ENCODE measurements at regions of chr6 and their contacts with region 1.

Region 1: GRCh38 chr6:25992413-25993037 is 29.9 kb downstream of the TRIM38 start:
- DNase-seq: peak; percentile 93
- CTCF ChIP-seq: peak; percentile 100

Region 2: DNA sequence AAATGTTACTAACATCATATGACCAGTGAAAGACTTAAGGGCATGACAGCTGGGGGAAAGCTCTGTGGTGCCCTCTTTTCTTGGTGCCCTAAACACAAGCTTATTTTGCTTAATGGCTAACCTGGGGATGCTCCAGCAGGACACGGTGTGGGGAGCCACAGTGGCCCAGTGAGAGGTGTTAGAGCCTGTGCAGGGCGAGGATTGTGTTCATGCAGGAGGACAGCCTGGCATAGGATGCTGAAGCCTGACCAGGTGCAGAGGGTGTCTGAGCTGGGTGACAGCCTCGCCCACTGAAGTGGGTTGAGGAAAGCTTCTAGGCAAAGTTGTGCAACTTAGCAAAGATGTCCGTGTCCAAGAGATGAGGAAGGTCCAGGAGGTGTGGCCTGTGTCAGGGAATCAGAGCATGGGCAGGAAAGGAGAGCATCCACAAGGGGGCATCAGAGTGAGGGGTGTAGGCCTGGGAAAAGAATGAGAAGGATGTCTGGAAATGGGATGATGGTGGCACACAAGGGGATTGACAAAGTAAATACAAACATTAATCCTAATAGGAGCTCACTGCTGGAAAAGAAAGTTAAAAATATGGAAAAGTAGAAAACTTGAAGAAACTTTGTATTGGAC is 204.1 kb before region 1 on chr6:
- CTCF ChIA-PET with region 1: interaction called, 16 read pairs
- POLR2A ChIA-PET with region 1: no interaction called
- DNase-seq: peak; percentile 22
- CTCF ChIP-seq: peak; percentile 46

Region 3: DNA sequence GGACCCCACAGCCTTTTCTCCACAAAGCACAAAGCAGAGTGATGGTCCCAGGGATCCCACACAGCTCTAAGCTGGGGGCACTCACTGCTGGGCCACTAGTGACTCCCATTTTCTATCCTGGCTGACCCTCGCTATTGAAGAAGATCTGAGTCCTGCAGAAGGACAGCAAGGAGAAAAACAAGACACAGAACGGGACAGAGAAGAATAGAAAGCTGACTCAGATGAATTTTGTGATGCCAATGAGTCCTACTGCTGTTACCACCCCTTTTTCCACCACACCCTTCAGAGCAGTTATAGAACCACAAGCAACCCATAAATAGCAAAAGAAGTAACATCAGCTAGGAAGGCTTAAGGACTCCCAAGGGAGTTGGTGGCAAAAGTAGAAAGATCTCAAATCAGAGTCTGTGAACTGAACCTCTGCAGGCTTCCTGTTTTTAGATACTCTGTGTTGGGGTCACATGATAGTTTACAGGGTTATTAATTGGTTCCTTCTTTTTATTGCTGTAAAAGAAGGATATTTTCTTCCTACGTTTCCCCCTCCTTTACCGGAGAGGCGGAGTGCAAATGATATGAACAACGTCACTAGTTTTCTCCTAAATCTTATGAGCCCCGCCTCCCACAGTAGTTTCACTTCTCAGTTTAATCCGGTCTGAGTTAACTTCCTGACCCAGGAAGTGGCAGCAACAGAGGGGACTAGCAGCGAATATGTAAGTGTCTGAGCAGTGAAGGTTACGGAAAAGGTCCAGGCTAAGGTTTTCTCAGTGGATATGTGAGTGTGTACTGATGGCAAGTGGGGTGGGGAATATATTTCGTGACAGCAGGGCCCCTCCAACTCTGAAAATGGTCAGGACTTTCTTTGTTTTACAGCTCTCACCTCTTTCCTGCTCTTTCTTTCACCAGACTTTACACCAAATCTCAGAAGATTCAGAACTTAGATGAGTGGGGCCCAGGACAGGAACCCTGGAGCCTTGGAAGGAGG is 30.1 kb before region 1 on chr6 and contains the start of gene TRIM38:
- CTCF ChIA-PET with region 1: interaction called, 48 read pairs
- POLR2A ChIA-PET with region 1: interaction called, 7 read pairs
- DNase-seq: peak; percentile 77
- CTCF ChIP-seq: no peak

Region 4: GRCh38 chr6:25971187-25971811 is 21.2 kb before region 1 on chr6:
- CTCF ChIA-PET with region 1: interaction called, 48 read pairs
- POLR2A ChIA-PET with region 1: interaction called, 7 read pairs
- DNase-seq: no peak
- CTCF ChIP-seq: no peak

Region 5: DNA sequence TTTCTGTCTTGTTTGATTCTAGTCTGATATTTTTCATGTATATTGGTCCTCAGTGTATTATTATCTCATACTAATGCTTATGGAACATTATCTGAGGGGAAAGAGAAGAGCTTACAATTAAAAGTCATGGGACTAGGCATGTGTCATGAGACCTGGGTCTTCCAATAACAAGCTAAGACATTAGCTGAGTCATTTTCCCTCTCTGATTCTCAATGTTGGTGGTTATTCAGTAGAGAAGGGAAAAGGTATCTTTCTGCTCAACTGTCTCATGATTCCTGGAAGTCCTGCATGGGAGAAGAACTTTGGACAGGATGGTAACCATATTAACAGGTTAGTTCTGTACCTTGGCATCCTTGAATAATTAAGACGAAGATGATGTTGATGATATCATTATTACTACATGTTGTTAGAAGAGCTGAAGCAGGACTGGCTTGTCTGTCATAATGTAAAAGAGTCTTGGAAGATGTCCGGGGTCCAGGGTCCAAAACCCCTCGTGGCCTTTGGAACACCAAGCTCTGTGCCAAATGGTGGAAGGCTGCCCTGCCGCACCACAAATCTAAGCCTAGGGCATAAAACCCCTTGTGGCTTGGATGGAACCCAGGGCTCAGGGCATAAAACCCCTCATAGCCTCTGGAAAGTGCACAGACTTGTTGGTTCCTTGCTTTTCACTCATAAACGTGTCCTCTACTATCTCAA is 10.8 kb before region 1 on chr6:
- CTCF ChIA-PET with region 1: interaction called, 50 read pairs
- POLR2A ChIA-PET with region 1: no interaction called
- DNase-seq: no peak
- CTCF ChIP-seq: no peak

Region 6: DNA sequence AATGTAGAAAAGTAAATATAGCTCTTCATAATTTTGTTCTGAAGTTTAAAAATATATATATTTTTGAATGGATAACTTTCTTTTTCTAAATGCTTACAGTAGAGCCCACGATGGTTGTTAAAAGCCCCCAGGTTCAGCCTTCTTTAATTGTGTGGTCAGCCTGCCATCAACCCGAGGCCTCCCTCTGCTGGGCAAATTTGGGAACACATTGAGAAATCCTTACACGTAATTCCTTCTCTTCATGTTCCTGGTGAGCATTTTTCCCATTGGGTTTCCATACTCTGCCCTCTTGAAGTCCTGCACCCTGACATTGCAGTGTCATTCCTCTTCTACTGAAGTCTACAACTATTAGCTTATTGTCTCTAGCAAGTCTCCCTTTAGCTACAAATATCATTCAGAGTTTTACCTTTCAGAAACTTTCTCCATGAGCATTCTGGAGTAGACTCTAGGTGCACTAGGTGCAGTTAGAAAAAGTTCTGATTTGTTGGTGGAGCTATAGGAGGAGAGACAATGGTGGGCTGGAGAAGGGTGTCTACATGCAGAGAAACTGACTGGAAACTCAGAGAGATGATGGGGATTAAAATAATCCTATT is 10.7 kb after region 1 on chr6:
- CTCF ChIA-PET with region 1: interaction called, 125 read pairs
- POLR2A ChIA-PET with region 1: interaction called, 7 read pairs
- DNase-seq: peak; percentile 63
- CTCF ChIP-seq: peak; percentile 82

Region 7: GRCh38 chr6:26012061-26012460 is 19.5 kb after region 1 on chr6:
- CTCF ChIA-PET with region 1: interaction called, 125 read pairs
- POLR2A ChIA-PET with region 1: interaction called, 6 read pairs
- DNase-seq: no peak
- CTCF ChIP-seq: no peak

Measured in GM10248 (cell line).